Gastrocnemius medialis (tissue), 4 donors: ENCODE measurements at regions of chr3 and their contacts with region 1.

Region 1: DNA sequence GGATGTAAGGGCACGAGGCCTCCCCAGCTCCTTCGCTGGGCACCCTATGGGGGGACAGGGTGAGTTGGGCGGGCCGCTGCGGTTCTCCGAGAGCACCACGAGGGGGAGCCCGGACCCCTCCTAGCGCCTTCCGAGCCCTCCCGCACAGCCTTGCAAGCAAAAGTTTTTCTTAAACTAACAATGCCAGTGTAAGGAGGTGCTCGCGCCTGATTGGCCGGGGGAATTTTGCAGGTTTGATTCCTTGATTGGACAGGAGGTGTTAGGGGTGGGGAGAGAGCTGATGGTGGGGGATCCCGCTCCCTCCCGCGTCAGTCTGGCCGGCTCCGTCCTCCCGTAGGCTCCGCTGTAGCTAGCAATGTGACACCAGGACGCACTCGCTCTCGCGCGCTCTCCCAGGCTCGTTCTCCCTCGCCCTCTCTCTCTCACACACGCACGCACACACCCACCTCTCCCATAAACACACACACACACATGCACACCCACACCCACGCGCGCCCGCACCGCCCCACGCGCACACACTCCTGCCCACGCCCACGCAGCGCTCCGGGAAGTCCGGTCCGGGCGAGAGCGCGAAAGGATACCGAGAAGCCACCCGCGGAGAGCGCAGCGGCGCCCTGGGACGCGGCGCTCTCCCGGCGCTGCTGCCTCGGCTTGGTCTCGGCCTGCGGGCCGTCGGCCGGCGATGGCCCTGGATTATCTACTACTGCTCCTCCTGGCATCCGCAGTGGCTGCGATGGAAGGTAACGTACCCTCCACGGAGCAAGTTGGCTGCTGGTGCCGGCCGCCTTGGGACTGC is at the start of gene EPHB1:
- DNase-seq: peak; percentile 84 to 93
- ATAC-seq: peak; percentile 89
- H3K4me3 ChIP-seq: peak within 1 kb of the TSS; percentile 63 to 77 (median 72)
- H3K27ac ChIP-seq: peak within 1 kb of the TSS; percentile 72 to 86 (median 74)
- H3K4me1 ChIP-seq: peaks cover 15 to 32% of the 10 kb centered on the region in 2 donors
- H3K27me3 ChIP-seq: no peaks in the 10 kb centered on the region
- CTCF ChIP-seq: peak; percentile 92 to 97 (median 94)
- POLR2A ChIP-seq: peak; percentile 59 to 86
- total RNA-seq, gene EPHB1: 1.00 to 8.9 (median 4.5) TPM

Region 2: GRCh38 chr3:134978658-134979057 is 183.5 kb after region 1 on chr3:
- in situ Hi-C with region 1: no loop called
- intact Hi-C with region 1: loop called (anchors 5 kb)
- DNase-seq: peak; percentile 15 to 62
- ATAC-seq: peak; percentile 65 to 91
- H3K4me3 ChIP-seq: no peak overlapping the region
- H3K27ac ChIP-seq: no peak overlapping the region
- H3K4me1 ChIP-seq: peaks cover 0 to 7% of the 10 kb centered on the region in 2 donors
- H3K27me3 ChIP-seq: no peaks in the 10 kb centered on the region
- CTCF ChIP-seq: no peak
- POLR2A ChIP-seq: no peak

Region 3: GRCh38 chr3:135240426-135240825 is 445.3 kb after region 1 on chr3:
- in situ Hi-C with region 1: loop called in 1 of 4 experiments (anchors 10 kb)
- intact Hi-C with region 1: no loop called
- DNase-seq: no peak
- ATAC-seq: no peak
- H3K4me3 ChIP-seq: no peak overlapping the region
- H3K27ac ChIP-seq: no peak overlapping the region
- H3K4me1 ChIP-seq: peaks cover 0 to 4% of the 10 kb centered on the region in 2 donors
- H3K27me3 ChIP-seq: no peaks in the 10 kb centered on the region
- CTCF ChIP-seq: peak in 1 of 5 experiments; percentile 9
- POLR2A ChIP-seq: no peak

Region 4: GRCh38 chr3:135310317-135310716 is 515.2 kb after region 1 on chr3:
- in situ Hi-C with region 1: no loop called
- intact Hi-C with region 1: no loop called
- DNase-seq: no peak
- ATAC-seq: no peak
- H3K4me3 ChIP-seq: no peak overlapping the region
- H3K27ac ChIP-seq: no peak overlapping the region
- H3K4me1 ChIP-seq: no peaks in the 10 kb centered on the region
- H3K27me3 ChIP-seq: no peaks in the 10 kb centered on the region
- CTCF ChIP-seq: no peak
- POLR2A ChIP-seq: no peak

Region 5: GRCh38 chr3:135513106-135514059 is 718.2 kb after region 1 on chr3:
- in situ Hi-C with region 1: loop called in 3 of 4 experiments (anchors 10 to 25 kb)
- intact Hi-C with region 1: no loop called
- DNase-seq: no peak
- ATAC-seq: no peak
- H3K4me3 ChIP-seq: no peak overlapping the region
- H3K27ac ChIP-seq: no peak overlapping the region
- H3K4me1 ChIP-seq: no peaks in the 10 kb centered on the region
- H3K27me3 ChIP-seq: no peaks in the 10 kb centered on the region
- CTCF ChIP-seq: no peak
- POLR2A ChIP-seq: no peak

Region 6: GRCh38 chr3:136042608-136043221 is 1247.6 kb after region 1 on chr3:
- in situ Hi-C with region 1: loop called in 1 of 4 experiments (anchors 25 kb)
- intact Hi-C with region 1: no loop called
- DNase-seq: no peak
- ATAC-seq: peak; percentile 54 to 59
- H3K4me3 ChIP-seq: no peak overlapping the region
- H3K27ac ChIP-seq: peak overlapping the region in 2 of 4 donors; percentile 18 to 67
- H3K4me1 ChIP-seq: peaks cover 11 to 24% of the 10 kb centered on the region in 2 donors
- H3K27me3 ChIP-seq: no peaks in the 10 kb centered on the region
- CTCF ChIP-seq: peak; percentile 54 to 69 (median 65)
- POLR2A ChIP-seq: no peak